K562 (cell line): ENCODE measurements at regions of chr4 and their contacts with region 1.

Region 1: GRCh38 chr4:99563310-99564186 is at the start of gene TRMT10A:
- DNase-seq: peak; percentile 83 to 98 (median 86)
- ATAC-seq: peak; percentile 94
- H3K4me3 ChIP-seq: peak within 1 kb of the TSS; percentile 65
- H3K27ac ChIP-seq: peak within 1 kb of the TSS; percentile 96
- H3K4me1 ChIP-seq: peaks cover 0 to 4% of the 10 kb centered on the region in 2 experiments; a peak in 1 of 5 replicates
- H3K27me3 ChIP-seq: no peaks in the 10 kb centered on the region
- CTCF ChIP-seq: no peak
- EP300 ChIP-seq: 0 out of 2 replicates have a peak, but pooled peaks have one; percentile 9
- POLR2A ChIP-seq: peak; percentile 92
- RAD21 ChIP-seq: no peak
- polyA plus RNA-seq, gene TRMT10A: 13.1 to 16.1 TPM

Region 2: GRCh38 chr4:99723612-99724011 is 160.1 kb after region 1 on chr4:
- CTCF ChIA-PET with region 1: no interaction called
- POLR2A ChIA-PET with region 1: no interaction called
- in situ Hi-C with region 1: no loop called
- intact Hi-C with region 1: loop called (anchors 1 kb)
- DNase-seq: peak; percentile 17 to 88 (median 50)
- ATAC-seq: peak; percentile 98
- H3K4me3 ChIP-seq: no peak overlapping the region; the same call in 1 of the 2 replicates
- H3K27ac ChIP-seq: peak overlapping the region; percentile 55; the same call in 2 of the 3 replicates
- H3K4me1 ChIP-seq: peaks cover 4 to 18% of the 10 kb centered on the region in 2 experiments; a peak in 4 of 5 replicates
- H3K27me3 ChIP-seq: no peaks in the 10 kb centered on the region
- CTCF ChIP-seq: no peak
- EP300 ChIP-seq: no peak; the same call in 1 of the 2 replicates
- POLR2A ChIP-seq: no peak
- RAD21 ChIP-seq: no peak

Region 3: GRCh38 chr4:99790796-99791617 is 227.5 kb after region 1 on chr4:
- CTCF ChIA-PET with region 1: no interaction called
- POLR2A ChIA-PET with region 1: no interaction called
- in situ Hi-C with region 1: loop called (anchors 10 kb)
- intact Hi-C with region 1: no loop called
- DNase-seq: no peak
- ATAC-seq: no peak
- H3K4me3 ChIP-seq: no peak overlapping the region
- H3K27ac ChIP-seq: no peak overlapping the region
- H3K4me1 ChIP-seq: no peaks in the 10 kb centered on the region
- H3K27me3 ChIP-seq: peaks cover 6 to 8% of the 10 kb centered on the region in 2 experiments; a peak in 4 of 5 replicates
- CTCF ChIP-seq: no peak
- EP300 ChIP-seq: no peak
- POLR2A ChIP-seq: no peak
- RAD21 ChIP-seq: no peak

Region 4: GRCh38 chr4:99875072-99875471 is 311.5 kb after region 1 on chr4:
- CTCF ChIA-PET with region 1: no interaction called
- POLR2A ChIA-PET with region 1: no interaction called
- in situ Hi-C with region 1: loop called (anchors 10 kb)
- intact Hi-C with region 1: no loop called
- DNase-seq: no peak
- ATAC-seq: no peak
- H3K4me3 ChIP-seq: no peak overlapping the region
- H3K27ac ChIP-seq: no peak overlapping the region
- H3K4me1 ChIP-seq: no peaks in the 10 kb centered on the region
- H3K27me3 ChIP-seq: no peaks in the 10 kb centered on the region
- CTCF ChIP-seq: no peak
- EP300 ChIP-seq: no peak
- POLR2A ChIP-seq: no peak
- RAD21 ChIP-seq: no peak

Region 5: GRCh38 chr4:99885063-99885664 is 321.6 kb after region 1 on chr4:
- CTCF ChIA-PET with region 1: interaction called, 12 read pairs
- POLR2A ChIA-PET with region 1: no interaction called
- in situ Hi-C with region 1: no loop called
- intact Hi-C with region 1: loop called (anchors 2 kb)
- DNase-seq: peak; percentile 23 to 62 (median 31)
- ATAC-seq: peak; percentile 72
- H3K4me3 ChIP-seq: no peak overlapping the region
- H3K27ac ChIP-seq: no peak overlapping the region
- H3K4me1 ChIP-seq: no peaks in the 10 kb centered on the region
- H3K27me3 ChIP-seq: no peaks in the 10 kb centered on the region
- CTCF ChIP-seq: peak; percentile 47 to 81 (median 50); a peak in 4 of 6 replicates
- EP300 ChIP-seq: no peak
- POLR2A ChIP-seq: no peak
- RAD21 ChIP-seq: peak; percentile 81 to 83